HepG2 (cell line): ENCODE measurements at regions of chr1 and their contacts with region 1.

Region 1: DNA sequence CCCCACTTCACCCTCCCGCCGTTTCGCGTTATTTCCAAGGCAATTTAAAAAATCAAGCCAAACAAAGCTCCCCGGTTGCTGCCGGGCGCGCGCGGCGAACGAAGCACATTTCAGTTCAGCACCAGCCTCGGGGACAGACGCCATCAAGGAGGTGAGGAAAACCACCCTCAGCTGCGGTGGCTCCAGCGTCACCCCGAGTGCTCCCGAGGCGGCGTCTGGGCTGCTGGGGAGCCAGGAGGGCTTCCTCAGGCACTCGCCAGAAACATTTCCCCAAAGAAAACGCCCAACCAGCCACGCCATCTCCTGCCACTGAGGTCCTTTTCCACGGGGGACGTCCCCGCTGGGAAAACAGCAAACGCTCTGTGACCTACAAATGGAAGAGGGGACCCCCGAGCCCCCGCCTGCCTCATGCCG is 623 bp downstream of the GNG4 start:
- DNase-seq: peak; percentile 37
- ATAC-seq: peak; percentile 49
- H3K4me3 ChIP-seq: peak overlapping the region; percentile 72 to 88 (median 78)
- H3K27ac ChIP-seq: peak overlapping the region; percentile 87
- H3K4me1 ChIP-seq: peaks cover 55% of the 10 kb centered on the region
- H3K27me3 ChIP-seq: no peaks in the 10 kb centered on the region
- CTCF ChIP-seq: no peak
- EP300 ChIP-seq: no peak
- POLR2A ChIP-seq: no peak
- RAD21 ChIP-seq: no peak

Region 2: DNA sequence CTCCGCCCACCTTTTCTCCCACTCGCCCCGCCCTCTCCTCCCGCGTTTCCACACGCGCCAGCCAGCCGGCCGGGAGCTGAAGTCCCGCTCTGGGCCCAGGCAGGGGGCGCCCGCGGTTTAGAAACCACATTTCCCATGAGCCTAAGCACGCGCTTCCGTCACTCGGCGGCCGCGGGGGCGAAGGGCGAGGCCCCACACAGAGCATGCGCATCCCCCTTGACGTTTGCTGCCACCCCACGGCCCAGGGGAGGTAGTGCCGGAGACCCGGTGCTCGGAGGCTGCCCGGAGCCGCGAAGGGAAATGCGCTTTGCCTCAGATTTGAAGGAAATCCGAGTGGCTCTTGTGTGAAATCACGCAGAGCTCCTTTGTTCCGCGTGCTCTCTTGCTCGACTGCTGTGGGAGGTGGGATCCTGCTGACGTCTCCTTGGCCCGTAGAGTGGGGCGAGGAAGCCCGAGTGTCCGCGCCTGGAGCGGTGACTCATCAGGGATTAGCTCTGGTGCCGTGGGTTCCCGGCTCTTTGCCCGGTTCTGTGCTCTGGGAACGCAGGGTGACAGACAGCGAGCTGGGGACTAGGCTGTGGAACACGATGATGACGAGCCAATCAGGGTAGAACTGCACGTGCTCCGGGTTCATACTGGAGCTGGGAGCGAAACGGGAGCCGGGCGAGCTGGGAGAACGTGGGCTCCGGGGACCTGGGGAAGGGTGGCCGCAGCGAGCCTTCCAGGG is 144.3 kb before region 1 on chr1:
- CTCF ChIA-PET with region 1: no interaction called
- POLR2A ChIA-PET with region 1: interaction called, 13 read pairs
- in situ Hi-C with region 1: no loop called
- intact Hi-C with region 1: loop called (anchors 5 kb)
- DNase-seq: peak; percentile 97
- ATAC-seq: peak; percentile 86
- H3K4me3 ChIP-seq: peak overlapping the region; percentile 84 to 89 (median 86)
- H3K27ac ChIP-seq: peak overlapping the region; percentile 98
- H3K4me1 ChIP-seq: peaks cover 46% of the 10 kb centered on the region
- H3K27me3 ChIP-seq: no peaks in the 10 kb centered on the region; a peak in 1 of 5 replicates
- CTCF ChIP-seq: peak; percentile 98
- EP300 ChIP-seq: no peak
- POLR2A ChIP-seq: peak; percentile 47 to 63; a peak in 3 of 4 replicates
- RAD21 ChIP-seq: no peak

Region 3: DNA sequence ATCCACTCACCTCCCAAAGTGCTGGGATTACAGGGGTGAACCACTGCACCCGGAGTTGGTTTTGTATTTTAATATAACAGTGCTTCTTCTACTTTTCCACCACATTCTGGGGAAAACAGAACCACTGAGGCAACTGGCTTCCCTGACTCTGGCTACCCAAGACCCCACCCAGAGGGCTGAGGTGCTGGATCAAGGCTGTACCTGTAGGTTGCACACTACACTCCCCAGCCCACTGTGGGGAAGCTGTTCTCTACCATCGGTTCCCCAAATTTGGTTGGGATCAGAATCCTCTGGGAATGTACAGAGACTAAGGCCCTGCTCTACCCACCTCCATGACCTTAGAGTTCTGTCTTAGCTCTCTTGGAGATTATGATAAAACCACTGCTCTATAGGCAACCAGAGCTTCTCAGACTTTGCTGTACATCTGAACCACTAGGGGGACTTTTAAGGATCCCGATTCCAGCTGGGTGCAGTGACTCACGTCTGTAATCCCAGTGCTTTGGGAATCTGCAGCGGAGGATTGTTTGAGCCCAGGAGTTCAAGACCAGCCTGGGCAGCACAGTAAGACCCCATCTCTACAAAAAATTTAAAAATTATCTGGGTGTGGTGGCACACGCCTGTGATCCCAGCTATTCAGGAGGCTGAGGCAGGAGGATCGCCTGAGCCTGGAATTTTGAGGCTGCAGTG is 51.0 kb before region 1 on chr1:
- CTCF ChIA-PET with region 1: no interaction called
- POLR2A ChIA-PET with region 1: interaction called, 4 read pairs
- in situ Hi-C with region 1: no loop called
- intact Hi-C with region 1: loop called (anchors 2 kb)
- DNase-seq: peak; percentile 27
- ATAC-seq: peak; percentile 74
- H3K4me3 ChIP-seq: no peak overlapping the region
- H3K27ac ChIP-seq: no peak overlapping the region
- H3K4me1 ChIP-seq: no peaks in the 10 kb centered on the region
- H3K27me3 ChIP-seq: no peaks in the 10 kb centered on the region
- CTCF ChIP-seq: peak; percentile 40
- EP300 ChIP-seq: no peak
- POLR2A ChIP-seq: no peak
- RAD21 ChIP-seq: peak; percentile 27; the same call in 1 of the 2 replicates

Region 4: GRCh38 chr1:235614442-235614954 is 34.5 kb before region 1 on chr1:
- CTCF ChIA-PET with region 1: no interaction called
- POLR2A ChIA-PET with region 1: interaction called, 6 read pairs
- in situ Hi-C with region 1: no loop called
- intact Hi-C with region 1: loop called (anchors 2 kb)
- DNase-seq: peak; percentile 80
- ATAC-seq: peak; percentile 99
- H3K4me3 ChIP-seq: peak overlapping the region in 1 of 3 experiments; percentile 32; a peak in 1 of 6 replicates
- H3K27ac ChIP-seq: peak overlapping the region; percentile 57
- H3K4me1 ChIP-seq: peaks cover 32% of the 10 kb centered on the region
- H3K27me3 ChIP-seq: no peaks in the 10 kb centered on the region
- CTCF ChIP-seq: peak; percentile 77
- EP300 ChIP-seq: 0 out of 4 replicates have a peak, but pooled peaks of 1 of the 2 experiments have one; percentile 29
- POLR2A ChIP-seq: no peak
- RAD21 ChIP-seq: peak; percentile 76

Region 5: GRCh38 chr1:235632506-235633401 is 16.2 kb before region 1 on chr1:
- CTCF ChIA-PET with region 1: no interaction called
- POLR2A ChIA-PET with region 1: interaction called, 12 read pairs
- in situ Hi-C with region 1: no loop called
- intact Hi-C with region 1: no loop called
- DNase-seq: no peak
- ATAC-seq: no peak
- H3K4me3 ChIP-seq: no peak overlapping the region
- H3K27ac ChIP-seq: no peak overlapping the region
- H3K4me1 ChIP-seq: peaks cover 28% of the 10 kb centered on the region
- H3K27me3 ChIP-seq: no peaks in the 10 kb centered on the region
- CTCF ChIP-seq: no peak
- EP300 ChIP-seq: no peak
- POLR2A ChIP-seq: no peak
- RAD21 ChIP-seq: no peak

Region 6: DNA sequence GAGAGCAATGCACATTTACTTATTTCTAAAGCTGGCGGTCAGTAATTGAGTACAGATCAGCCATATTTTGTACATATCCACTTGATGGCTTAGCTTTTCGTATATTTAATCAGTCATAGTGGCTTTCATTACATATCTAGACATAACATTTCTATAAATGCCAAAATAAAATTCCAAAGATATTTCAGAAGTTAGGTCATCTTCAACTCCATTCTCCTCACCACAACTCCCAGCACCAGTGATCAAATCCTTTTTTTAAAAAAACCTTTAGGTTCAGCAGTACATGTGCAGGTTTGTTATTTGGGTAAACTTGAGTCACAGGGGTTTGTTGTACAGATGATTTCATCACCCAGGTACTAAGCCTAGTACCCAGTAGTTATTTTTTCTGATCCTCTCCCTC is 54.5 kb after region 1 on chr1:
- CTCF ChIA-PET with region 1: no interaction called
- POLR2A ChIA-PET with region 1: no interaction called
- in situ Hi-C with region 1: no loop called
- intact Hi-C with region 1: no loop called
- DNase-seq: no peak
- ATAC-seq: no peak
- H3K4me3 ChIP-seq: no peak overlapping the region
- H3K27ac ChIP-seq: no peak overlapping the region
- H3K4me1 ChIP-seq: no peaks in the 10 kb centered on the region
- H3K27me3 ChIP-seq: no peaks in the 10 kb centered on the region
- CTCF ChIP-seq: no peak
- EP300 ChIP-seq: no peak
- POLR2A ChIP-seq: no peak
- RAD21 ChIP-seq: no peak